Activated CD4-positive, alpha-beta T cell treated with anti-CD3 and anti-CD28 coated beads for 36 hours (primary cell): ENCODE measurements at regions of chr1 and their contacts with region 1.

Region 1: GRCh38 chr1:110554871-110555801 is 36.2 kb upstream of the KCNA10 start:
- DNase-seq: peak; percentile 76
- ATAC-seq: peak; percentile 79
- H3K4me3 Mint-ChIP-seq: no peak overlapping the region
- H3K27ac Mint-ChIP-seq: no peak overlapping the region
- H3K4me1 Mint-ChIP-seq: peaks cover 2% of the 10 kb centered on the region
- H3K27me3 Mint-ChIP-seq: peaks cover 45% of the 10 kb centered on the region

Region 2: DNA sequence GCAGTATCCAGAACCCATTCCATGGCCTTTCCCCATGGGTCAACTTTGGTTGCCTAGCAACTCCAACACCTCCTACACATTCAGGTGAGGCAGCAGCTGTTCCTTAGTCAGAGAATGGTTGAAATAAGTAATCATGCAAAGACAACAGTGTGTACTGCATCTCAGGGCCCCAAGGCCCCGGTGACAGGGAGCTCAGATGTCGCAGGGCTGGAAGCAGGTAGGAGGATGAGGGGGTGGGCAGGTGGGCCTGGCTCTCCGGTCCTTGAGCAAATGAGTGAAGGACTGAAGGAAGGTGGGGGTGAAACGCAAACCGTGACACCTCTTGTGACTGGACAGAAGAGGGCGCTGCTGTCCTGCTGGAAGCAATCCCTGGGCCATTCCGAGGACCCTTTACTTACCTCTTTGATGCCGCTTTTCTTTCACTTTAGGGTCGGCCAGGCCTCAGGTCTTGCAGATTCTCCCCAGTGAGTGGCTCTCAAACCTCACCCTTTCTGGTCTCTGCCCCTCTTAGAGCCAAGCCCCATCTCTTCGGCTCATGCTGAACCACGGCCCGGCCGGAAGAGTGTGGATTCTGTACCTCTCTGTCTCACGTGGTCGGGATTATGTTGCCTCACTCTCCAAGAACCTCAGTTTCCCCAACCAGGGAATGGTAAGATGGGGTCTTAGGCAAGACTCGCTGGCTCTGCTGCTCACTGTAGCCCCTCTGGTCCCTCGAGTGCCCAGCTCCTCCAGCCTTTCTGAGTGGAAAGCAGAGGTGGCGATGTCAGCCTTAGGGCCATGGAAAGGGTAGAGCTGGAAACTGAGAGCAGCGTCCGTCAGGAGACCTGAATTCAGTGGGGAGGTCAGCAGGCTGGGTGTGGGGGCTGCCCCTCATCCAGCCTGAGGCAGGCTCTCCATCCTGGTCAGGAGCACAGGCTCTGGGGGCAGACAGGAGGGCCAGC is 30.6 kb before region 1 on chr1:
- CTCF ChIA-PET with region 1: interaction called, 3 read pairs
- POLR2A ChIA-PET with region 1: no interaction called
- intact Hi-C with region 1: loop called in 1 of 2 experiments (anchors 1 kb)
- DNase-seq: peak; percentile 75
- ATAC-seq: peak; percentile 88
- H3K4me3 Mint-ChIP-seq: no peak overlapping the region
- H3K27ac Mint-ChIP-seq: no peak overlapping the region
- H3K4me1 Mint-ChIP-seq: peaks cover 2% of the 10 kb centered on the region
- H3K27me3 Mint-ChIP-seq: peaks cover 25% of the 10 kb centered on the region

Region 3: GRCh38 chr1:110572751-110573150 is 17.6 kb after region 1 on chr1:
- CTCF ChIA-PET with region 1: interaction called, 13 read pairs
- POLR2A ChIA-PET with region 1: no interaction called
- intact Hi-C with region 1: no loop called
- DNase-seq: no peak
- ATAC-seq: no peak
- H3K4me3 Mint-ChIP-seq: no peak overlapping the region
- H3K27ac Mint-ChIP-seq: no peak overlapping the region
- H3K4me1 Mint-ChIP-seq: no peaks in the 10 kb centered on the region
- H3K27me3 Mint-ChIP-seq: peaks cover 10% of the 10 kb centered on the region

Region 4: GRCh38 chr1:110605901-110606656 is 50.9 kb after region 1 on chr1 and contains the start of gene KCNA2:
- CTCF ChIA-PET with region 1: interaction called, 13 read pairs
- POLR2A ChIA-PET with region 1: no interaction called
- intact Hi-C with region 1: no loop called
- DNase-seq: peak; percentile 24
- ATAC-seq: peak; percentile 7
- H3K4me3 Mint-ChIP-seq: peak within 1 kb of the TSS; percentile 68
- H3K27ac Mint-ChIP-seq: no peak within 1 kb of the TSS
- H3K4me1 Mint-ChIP-seq: peaks cover 8% of the 10 kb centered on the region
- H3K27me3 Mint-ChIP-seq: peaks cover 48% of the 10 kb centered on the region
- total RNA-seq, gene KCNA2: 0.25 to 0.37 TPM

Region 5: DNA sequence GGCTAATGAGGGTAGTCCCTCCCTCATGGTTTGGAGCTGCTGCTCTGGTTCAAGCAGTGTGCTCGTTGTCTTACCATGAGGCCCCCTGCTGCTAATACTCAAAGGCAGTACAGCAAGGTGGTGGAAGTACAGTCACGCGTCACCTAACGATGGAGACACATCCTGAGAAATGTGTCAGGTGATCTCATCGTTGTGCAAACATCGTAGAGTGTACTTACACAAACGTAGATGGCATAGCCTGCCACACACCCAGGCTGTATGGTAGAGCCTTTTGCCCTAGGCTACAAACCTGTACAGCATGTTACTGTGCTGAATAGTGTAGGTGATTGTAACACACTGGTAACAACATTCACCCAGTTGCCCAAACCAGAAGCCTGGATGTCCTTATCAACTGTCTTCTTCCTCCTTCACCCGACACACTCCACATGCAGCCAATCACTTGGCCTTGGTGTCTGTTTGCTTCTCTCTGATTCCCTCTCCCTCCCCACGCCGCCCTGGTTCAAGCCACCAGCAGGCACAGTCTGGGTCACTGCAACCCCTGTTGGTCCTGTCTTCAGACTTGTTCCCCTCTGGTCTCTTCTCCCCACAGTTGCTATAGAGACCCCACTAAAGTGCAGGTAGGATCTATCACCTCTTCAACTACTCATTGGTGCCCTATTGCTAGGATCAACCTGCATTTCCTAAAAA is 57.1 kb after region 1 on chr1:
- CTCF ChIA-PET with region 1: interaction called, 13 read pairs
- POLR2A ChIA-PET with region 1: no interaction called
- intact Hi-C with region 1: loop called (anchors 1 to 2 kb)
- DNase-seq: no peak
- ATAC-seq: no peak
- H3K4me3 Mint-ChIP-seq: no peak overlapping the region
- H3K27ac Mint-ChIP-seq: no peak overlapping the region
- H3K4me1 Mint-ChIP-seq: peaks cover 6% of the 10 kb centered on the region
- H3K27me3 Mint-ChIP-seq: peaks cover 13% of the 10 kb centered on the region

Region 6: GRCh38 chr1:110686188-110686587 is 131.1 kb after region 1 on chr1:
- CTCF ChIA-PET with region 1: no interaction called
- POLR2A ChIA-PET with region 1: no interaction called
- intact Hi-C with region 1: no loop called
- DNase-seq: peak; percentile 27
- ATAC-seq: peak; percentile 53
- H3K4me3 Mint-ChIP-seq: no peak overlapping the region
- H3K27ac Mint-ChIP-seq: no peak overlapping the region
- H3K4me1 Mint-ChIP-seq: peaks cover 7% of the 10 kb centered on the region
- H3K27me3 Mint-ChIP-seq: no peaks in the 10 kb centered on the region

Region 7: DNA sequence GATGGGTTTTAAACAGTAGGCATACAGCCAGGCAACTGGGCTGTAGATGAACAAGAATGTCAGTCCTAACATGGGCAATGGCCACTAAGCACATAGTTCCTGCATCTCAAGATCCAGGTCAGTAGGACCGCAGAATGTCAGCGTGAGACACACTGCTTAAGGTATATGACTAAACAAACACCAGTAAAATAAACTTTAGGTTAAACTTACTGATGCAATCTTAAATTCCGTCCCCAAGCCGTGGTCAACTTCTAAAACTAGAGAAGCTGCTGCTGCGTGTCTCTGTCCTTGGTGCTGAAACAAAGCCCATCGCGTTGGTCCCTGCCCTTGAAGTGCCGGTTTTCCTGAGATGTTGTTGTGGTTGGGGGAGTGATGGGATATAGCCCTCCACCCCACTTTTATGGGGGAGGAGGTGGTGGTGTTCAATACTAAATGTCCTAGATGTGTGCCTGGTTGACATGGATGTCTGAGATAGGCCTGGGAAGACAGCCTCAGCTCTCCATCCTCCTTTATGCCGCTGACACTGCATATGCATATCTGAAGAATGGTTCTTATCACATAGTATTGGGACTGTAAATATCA is 191.5 kb after region 1 on chr1:
- CTCF ChIA-PET with region 1: no interaction called
- POLR2A ChIA-PET with region 1: no interaction called
- intact Hi-C with region 1: no loop called
- DNase-seq: peak; percentile 79
- ATAC-seq: peak; percentile 23
- H3K4me3 Mint-ChIP-seq: no peak overlapping the region
- H3K27ac Mint-ChIP-seq: no peak overlapping the region
- H3K4me1 Mint-ChIP-seq: no peaks in the 10 kb centered on the region
- H3K27me3 Mint-ChIP-seq: peaks cover 12% of the 10 kb centered on the region